ENCODE measurements at regions of chr4 and their contacts with region 1.

Region 1: DNA sequence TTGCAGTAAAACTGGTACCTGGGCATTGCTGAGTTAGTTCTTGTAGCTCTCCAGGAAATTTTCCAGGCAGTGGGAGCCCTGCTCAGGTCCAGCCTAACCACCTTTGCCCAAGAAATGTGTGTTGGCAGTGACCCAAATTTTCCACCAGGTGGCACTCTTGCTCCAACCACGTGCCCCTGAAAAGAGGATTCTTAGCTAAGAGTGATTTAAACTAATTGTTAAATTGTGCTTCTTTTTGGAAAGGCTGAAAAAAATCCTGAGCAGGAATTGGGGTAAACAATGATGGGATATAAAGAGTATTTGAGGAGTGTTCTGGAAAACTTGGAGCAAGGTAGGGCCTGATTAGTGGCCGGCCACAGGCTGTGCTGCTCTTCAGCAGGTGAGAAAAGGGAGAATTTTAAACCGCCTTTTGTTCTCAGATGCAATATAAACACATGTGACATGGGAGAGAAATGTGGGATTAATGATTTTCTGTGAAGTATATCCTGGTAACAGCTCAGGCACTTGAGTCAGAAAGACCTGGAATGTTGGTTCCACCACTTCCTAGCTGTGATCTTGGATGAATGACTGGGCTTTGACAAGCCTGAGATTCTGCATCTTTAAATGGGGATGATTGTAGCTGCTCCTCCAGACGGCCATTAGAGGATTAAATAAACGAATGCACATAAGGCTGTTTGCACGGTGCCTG is 219.6 kb downstream of the PTTG2 start:
- DNase-seq: peak; percentile 52
- H3K4me3 ChIP-seq: no peak overlapping the region
- H3K27ac ChIP-seq: no peak overlapping the region
- H3K27me3 ChIP-seq: no peaks in the 10 kb centered on the region
- CTCF ChIP-seq: peak; percentile 92

Region 2: GRCh38 chr4:38062088-38062893 is 117.5 kb before region 1 on chr4:
- CTCF ChIA-PET with region 1: interaction called, 27 read pairs
- POLR2A ChIA-PET with region 1: no interaction called
- DNase-seq: peak; percentile 51
- H3K4me3 ChIP-seq: no peak overlapping the region; the same call in 1 of the 2 replicates
- H3K27ac ChIP-seq: no peak overlapping the region
- H3K27me3 ChIP-seq: no peaks in the 10 kb centered on the region
- CTCF ChIP-seq: peak; percentile 84

Region 3: DNA sequence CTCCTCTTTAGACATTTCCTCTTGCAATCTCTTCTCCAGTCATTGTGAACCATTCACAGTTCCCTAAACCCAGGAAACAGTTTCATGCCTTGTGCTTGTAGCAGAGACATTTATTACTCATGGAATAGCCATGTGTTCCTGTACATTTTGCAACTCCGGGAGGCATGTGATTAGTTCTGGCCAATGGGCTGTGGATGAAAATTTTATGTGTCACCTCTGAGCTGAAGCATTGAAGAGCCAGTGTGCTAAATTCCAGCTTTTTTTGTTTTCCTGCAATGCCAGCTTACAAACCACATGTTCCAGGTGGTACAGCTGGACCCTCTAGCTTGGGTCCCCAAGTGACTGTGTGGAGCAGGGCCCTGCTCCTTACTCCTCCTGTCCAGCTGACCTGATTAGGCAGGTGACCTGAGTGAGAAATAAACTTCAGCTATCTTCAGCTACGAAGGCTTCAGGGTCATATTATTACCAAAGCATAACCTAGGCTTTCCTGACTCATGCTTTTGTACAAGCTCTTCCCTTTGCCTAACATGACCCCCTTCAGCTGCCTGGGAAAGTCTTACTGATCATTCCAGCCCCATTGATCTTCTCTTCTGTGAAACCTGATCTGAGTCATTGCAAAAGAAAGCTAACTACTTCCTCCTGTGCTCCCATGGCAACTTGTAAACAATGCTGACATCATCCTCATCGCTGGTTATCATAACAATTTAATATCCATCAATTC is 19.2 kb before region 1 on chr4:
- CTCF ChIA-PET with region 1: interaction called, 31 read pairs
- POLR2A ChIA-PET with region 1: interaction called, 5 read pairs
- DNase-seq: peak; percentile 95
- H3K4me3 ChIP-seq: no peak overlapping the region
- H3K27ac ChIP-seq: peak overlapping the region; percentile 100
- H3K27me3 ChIP-seq: no peaks in the 10 kb centered on the region
- CTCF ChIP-seq: no peak

Region 4: GRCh38 chr4:38193236-38193863 is 13.5 kb after region 1 on chr4:
- CTCF ChIA-PET with region 1: interaction called, 12 read pairs
- POLR2A ChIA-PET with region 1: no interaction called
- DNase-seq: no peak
- H3K4me3 ChIP-seq: no peak overlapping the region
- H3K27ac ChIP-seq: no peak overlapping the region
- H3K27me3 ChIP-seq: peaks cover 5% of the 10 kb centered on the region
- CTCF ChIP-seq: no peak

Region 5: DNA sequence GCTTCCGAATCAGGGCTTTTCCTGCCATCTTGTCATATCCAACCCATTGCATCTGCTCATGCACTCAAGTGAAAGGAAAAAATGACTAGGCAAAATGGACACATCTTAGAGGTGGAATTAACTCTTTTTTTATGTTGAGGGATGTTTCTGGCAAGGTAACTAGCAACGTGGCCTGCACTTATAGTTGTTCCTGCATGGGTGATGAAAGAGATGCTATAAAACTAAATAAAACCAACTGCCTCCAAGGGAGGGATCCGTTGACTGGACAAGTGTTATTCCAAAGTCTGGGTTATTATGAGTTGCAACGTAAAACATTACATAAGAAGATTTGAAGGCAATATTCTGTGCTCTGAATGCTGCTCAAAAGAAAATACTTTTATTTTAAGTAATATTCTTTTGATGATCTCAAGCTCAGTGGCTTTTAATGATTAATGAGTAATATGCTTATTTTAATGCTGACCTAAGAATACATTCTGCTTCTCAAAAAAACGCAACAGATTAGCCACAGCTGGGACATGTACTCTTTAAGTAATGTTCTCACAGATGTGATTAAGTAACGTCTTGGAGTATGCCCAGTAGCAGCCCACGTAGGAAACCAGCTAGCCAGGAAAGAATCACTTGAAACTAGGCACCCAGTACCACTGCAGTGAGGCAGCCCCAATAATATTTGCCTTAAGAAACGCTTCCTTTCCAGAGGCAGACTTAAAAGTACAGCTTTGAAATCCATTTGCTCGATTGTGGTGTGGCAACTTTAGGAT is 511.6 kb after region 1 on chr4:
- CTCF ChIA-PET with region 1: interaction called, 18 read pairs
- POLR2A ChIA-PET with region 1: no interaction called
- DNase-seq: peak; percentile 73
- H3K4me3 ChIP-seq: no peak overlapping the region
- H3K27ac ChIP-seq: peak overlapping the region; percentile 71
- H3K27me3 ChIP-seq: no peaks in the 10 kb centered on the region
- CTCF ChIP-seq: no peak

Region 6: GRCh38 chr4:38730830-38731646 is 551.2 kb after region 1 on chr4:
- CTCF ChIA-PET with region 1: interaction called, 97 read pairs
- POLR2A ChIA-PET with region 1: interaction called, 5 read pairs
- DNase-seq: peak; percentile 88
- H3K4me3 ChIP-seq: no peak overlapping the region
- H3K27ac ChIP-seq: no peak overlapping the region
- H3K27me3 ChIP-seq: peaks cover 8% of the 10 kb centered on the region
- CTCF ChIP-seq: peak; percentile 95